Sciatic nerve (tissue), 2 donors: ENCODE measurements at regions of chrX and their contacts with region 1.

Region 1: GRCh38 chrX:53284684-53285447 is 3.5 kb upstream of the IQSEC2 start:
- DNase-seq: peak; percentile 80
- ATAC-seq: peak; percentile 37

Region 2: GRCh38 chrX:53262918-53263394 is 21.9 kb before region 1 on chrX:
- intact Hi-C with region 1: no loop called
- DNase-seq: no peak
- ATAC-seq: no peak

Region 3: GRCh38 chrX:53538781-53539180 is 253.9 kb after region 1 on chrX:
- intact Hi-C with region 1: loop called (anchors 10 kb)
- DNase-seq: no peak
- ATAC-seq: no peak